ENCODE measurements at regions of chr9 and their contacts with region 1.

Region 1: GRCh38 chr9:27548055-27548741 is 18.6 kb upstream of the MOB3B start:
- DNase-seq: no peak
- H3K4me3 ChIP-seq: no peak overlapping the region
- H3K27ac ChIP-seq: peak overlapping the region in 1 of 5 donors; percentile 3
- H3K4me1 ChIP-seq: peaks cover 0 to 20% of the 10 kb centered on the region in 2 donors
- H3K27me3 ChIP-seq: no peaks in the 10 kb centered on the region
- CTCF ChIP-seq: peak in 5 of 6 experiments; percentile 39 to 83 (median 53)
- POLR2A ChIP-seq: no peak

Region 2: DNA sequence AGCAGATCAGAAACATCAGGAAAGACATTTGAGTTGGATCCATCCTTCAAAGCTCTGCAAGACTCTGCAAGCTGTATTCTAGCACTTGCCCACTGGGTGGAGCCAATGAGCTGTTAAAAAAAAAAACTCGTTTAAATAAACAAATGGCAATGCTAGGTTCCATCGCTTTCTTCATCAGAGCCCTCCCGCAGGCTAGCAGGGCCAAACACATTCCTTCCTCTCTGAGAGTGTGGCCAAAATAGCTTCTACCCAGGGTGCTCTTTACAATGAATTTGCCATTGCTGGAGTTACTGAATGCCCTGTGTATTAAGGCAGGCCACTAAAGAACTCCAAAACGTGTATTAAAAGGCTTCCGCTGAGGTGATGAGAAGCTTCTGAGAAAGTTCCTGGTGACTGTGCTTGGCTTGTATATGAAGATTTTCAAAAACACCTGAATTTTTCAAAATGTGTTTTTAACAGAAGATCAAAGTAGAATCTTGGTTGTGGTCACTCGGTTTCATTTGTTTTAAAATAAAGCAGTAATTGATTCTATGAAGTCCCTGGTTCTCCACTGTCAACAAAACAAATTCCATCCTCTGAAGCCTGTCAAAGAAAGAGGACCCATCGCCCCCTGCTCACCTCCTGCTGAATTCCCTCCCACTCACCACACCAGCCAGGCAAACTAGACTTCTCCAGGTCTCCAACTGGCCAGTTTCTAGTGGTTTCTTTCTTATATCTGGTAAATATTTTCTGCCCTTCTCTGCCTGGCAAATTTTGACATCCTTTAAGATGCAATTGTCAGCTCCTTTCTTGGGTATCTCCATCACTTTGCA is 214.8 kb before region 1 on chr9:
- intact Hi-C with region 1: loop called (anchors 2 to 5 kb)
- DNase-seq: peak; percentile 47 to 84 (median 69)
- H3K4me3 ChIP-seq: no peak overlapping the region
- H3K27ac ChIP-seq: no peak overlapping the region
- H3K4me1 ChIP-seq: peaks cover 0 to 15% of the 10 kb centered on the region in 2 donors
- H3K27me3 ChIP-seq: no peaks in the 10 kb centered on the region
- CTCF ChIP-seq: peak; percentile 69 to 92 (median 88)
- POLR2A ChIP-seq: no peak

Measured in adrenal gland (tissue), 19 donors.